ENCODE measurements at regions of chr1 and their contacts with region 1.

Region 1: GRCh38 chr1:7454052-7454815 is 316.9 kb upstream of the VAMP3 start:
- DNase-seq: peak in 4 of 10 donors; percentile 20 to 63 (median 42)

Region 2: DNA sequence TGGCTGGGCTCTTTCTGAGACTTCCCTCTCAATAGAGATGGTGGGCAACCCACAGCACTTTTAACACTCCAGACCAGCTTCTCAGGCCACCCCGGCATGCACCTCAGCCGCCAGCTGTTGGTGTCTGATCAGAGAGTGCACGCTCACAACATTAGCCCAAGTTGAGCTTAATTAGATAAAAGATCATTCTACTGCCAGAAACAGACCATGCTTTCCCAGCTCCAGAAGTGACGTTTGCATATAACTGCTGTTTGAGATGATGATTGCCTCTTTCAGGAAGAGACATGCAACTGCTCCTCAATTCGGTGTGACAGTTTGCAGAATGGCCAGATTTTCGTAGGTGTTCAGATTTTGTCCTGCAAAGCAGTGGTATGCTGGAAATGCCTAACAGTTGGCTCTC is 31.6 kb after region 1 on chr1:
- intact Hi-C with region 1: loop called (anchors 1 kb)
- DNase-seq: peak in 1 of 10 donors; percentile 9

Region 3: DNA sequence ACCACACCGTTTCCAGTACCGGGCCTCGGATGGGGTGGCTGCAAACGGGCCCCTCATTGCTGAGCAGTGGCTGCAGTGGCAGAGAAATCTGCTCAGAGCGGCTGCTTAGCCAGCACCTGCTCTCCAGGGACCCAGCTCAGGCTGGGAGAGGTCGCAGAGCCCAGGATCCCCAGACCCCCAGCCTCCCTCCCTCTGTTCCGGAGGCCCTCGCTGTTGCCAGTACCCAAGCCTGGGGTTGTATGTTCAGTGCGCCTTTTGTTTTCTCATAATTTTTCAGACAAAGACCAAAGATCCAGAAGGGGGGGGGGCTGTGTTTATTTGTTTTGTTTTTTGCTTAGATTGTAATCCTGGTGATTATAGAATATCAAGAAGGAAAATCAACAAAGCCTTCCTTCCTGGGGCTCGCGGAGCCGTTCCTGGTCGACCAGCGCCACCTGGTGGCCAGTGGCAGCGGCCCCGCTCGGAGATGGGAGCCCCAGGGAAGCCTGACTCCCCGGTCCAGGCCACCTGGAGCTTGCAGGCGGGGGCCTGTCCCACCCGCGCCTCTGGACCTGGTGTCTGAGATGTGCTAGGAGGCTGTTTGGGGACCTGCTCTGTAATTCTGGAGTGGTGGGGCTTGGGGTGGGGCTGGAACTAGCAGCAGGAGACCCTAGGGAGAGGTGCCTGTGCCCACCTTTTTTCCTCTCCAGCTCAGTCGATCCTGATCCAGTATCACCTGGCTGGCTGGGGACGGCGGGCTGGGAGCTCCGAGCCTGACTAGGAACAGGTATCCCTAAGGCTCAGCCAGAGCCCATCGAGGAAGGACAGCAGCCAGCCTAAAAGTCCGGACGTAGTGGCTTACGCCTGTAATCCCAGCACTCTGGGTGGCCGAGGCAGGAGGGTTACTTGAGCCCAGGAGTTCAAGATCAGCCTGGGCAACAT is 193.0 kb after region 1 on chr1:
- intact Hi-C with region 1: loop called (anchors 1 kb)
- DNase-seq: peak; percentile 43 to 96 (median 80)